HEK293 (cell line): ENCODE measurements at regions of chr17 and their contacts with region 1.

Region 1: DNA sequence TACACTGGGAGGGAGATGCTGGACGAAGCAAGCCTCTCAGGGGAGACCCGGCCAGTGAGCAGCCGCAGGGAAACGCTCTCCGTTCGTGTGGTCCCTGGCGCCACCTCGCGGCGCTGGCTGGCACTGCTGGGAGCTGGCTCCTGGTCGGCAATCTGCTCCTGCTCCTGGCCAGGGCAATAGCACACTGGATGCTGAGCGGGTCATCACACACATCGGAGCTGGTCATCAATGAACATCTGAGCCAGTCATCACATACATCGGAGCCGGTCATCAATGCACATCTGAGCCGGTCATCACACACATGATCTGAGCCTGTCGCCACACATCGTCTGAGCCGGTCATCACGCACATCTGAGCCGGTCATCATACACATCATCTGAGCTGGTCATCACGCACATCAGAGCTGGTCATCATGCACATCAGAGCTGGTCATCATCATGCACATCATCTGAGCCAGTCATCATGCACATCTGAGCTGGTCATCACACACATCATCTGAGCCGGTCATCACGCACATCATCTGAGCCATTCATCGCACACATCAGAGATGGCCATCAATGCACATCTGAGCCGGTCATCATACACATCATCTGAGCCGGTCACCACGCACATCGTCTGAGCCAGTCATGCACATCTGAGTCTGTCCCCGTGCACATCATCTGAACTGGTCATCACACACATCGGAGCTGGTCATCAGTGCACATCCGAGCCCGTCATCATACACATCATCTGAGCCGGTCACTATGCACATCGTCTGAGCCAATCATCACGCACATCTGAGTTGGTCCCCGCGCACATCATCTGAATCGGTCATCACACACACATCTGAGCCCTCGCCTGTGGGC is 217.3 kb downstream of the RBFOX3 start:
- H3K4me3 ChIP-seq: no peak overlapping the region
- H3K27ac ChIP-seq: no peak overlapping the region
- H3K4me1 ChIP-seq: no peaks in the 10 kb centered on the region
- CTCF ChIP-seq: peak; percentile 87

Region 2: GRCh38 chr17:78840725-78841611 is 552.6 kb before region 1 on chr17 and contains the start of gene USP36:
- CTCF ChIA-PET with region 1: no interaction called
- POLR2A ChIA-PET with region 1: no interaction called
- H3K4me3 ChIP-seq: peak within 1 kb of the TSS; percentile 87
- H3K27ac ChIP-seq: peak within 1 kb of the TSS; percentile 87
- H3K4me1 ChIP-seq: peaks cover 8% of the 10 kb centered on the region; the same call in 1 of the 2 replicates
- CTCF ChIP-seq: peak; percentile 86; the same call in 1 of the 2 replicates

Region 3: GRCh38 chr17:79019632-79020584 is 373.7 kb before region 1 on chr17:
- CTCF ChIA-PET with region 1: interaction called, 18 read pairs
- POLR2A ChIA-PET with region 1: no interaction called
- H3K4me3 ChIP-seq: no peak overlapping the region
- H3K27ac ChIP-seq: peak overlapping the region; percentile 14; the same call in 1 of the 2 replicates
- H3K4me1 ChIP-seq: peaks cover 21% of the 10 kb centered on the region
- CTCF ChIP-seq: no peak

Region 4: DNA sequence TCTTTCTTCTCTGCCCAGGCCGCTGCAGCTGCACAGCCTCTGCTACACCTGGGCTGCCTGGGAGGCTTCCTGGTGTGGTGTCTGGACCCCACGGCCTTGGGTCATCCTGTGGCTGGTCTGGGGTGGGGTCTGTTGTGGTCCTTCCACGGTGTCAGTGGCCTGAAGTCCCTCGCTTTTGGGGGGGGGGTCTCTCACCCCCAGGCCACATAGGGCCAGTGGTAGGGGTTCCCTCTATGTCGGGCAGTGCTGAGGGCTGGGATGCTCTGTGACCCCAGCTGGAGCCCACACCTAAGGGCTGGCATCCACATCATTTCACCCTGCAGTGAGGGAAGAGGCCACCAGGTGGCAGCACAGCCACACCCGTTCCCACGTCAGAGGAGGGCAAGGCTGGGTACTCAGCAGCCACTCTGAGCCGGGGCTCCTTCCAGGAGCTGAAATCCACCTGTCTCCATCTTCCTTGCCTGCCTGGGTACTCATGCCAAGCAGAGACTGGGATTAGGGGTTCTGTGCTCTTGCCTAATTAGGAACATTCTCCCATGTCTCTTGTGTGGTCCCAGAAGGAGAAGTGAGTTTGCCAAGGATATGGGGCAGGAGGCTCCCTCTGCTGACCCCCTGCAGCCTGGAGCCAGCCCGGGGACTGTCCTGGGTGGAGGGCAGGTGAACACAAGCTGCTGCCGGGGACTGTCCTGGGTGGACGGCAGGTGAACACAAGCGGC is 306.0 kb before region 1 on chr17:
- CTCF ChIA-PET with region 1: interaction called, 346 read pairs
- POLR2A ChIA-PET with region 1: interaction called, 3 read pairs
- H3K4me3 ChIP-seq: no peak overlapping the region
- H3K27ac ChIP-seq: no peak overlapping the region
- H3K4me1 ChIP-seq: no peaks in the 10 kb centered on the region
- CTCF ChIP-seq: peak; percentile 91

Region 5: GRCh38 chr17:79179334-79179733 is 214.2 kb before region 1 on chr17:
- CTCF ChIA-PET with region 1: interaction called, 15 read pairs
- POLR2A ChIA-PET with region 1: interaction called, 3 read pairs
- H3K4me3 ChIP-seq: no peak overlapping the region
- H3K27ac ChIP-seq: no peak overlapping the region
- H3K4me1 ChIP-seq: no peaks in the 10 kb centered on the region
- CTCF ChIP-seq: no peak

Region 6: GRCh38 chr17:79406316-79406715 is 12.7 kb after region 1 on chr17:
- CTCF ChIA-PET with region 1: interaction called, 106 read pairs
- POLR2A ChIA-PET with region 1: no interaction called
- H3K4me3 ChIP-seq: no peak overlapping the region
- H3K27ac ChIP-seq: no peak overlapping the region
- H3K4me1 ChIP-seq: no peaks in the 10 kb centered on the region
- CTCF ChIP-seq: no peak

Region 7: GRCh38 chr17:79437856-79438457 is 44.4 kb after region 1 on chr17:
- CTCF ChIA-PET with region 1: no interaction called
- POLR2A ChIA-PET with region 1: no interaction called
- H3K4me3 ChIP-seq: no peak overlapping the region
- H3K27ac ChIP-seq: no peak overlapping the region
- H3K4me1 ChIP-seq: no peaks in the 10 kb centered on the region
- CTCF ChIP-seq: no peak

Region 8: GRCh38 chr17:79707931-79708891 is 314.6 kb after region 1 on chr17:
- CTCF ChIA-PET with region 1: interaction called, 13 read pairs
- POLR2A ChIA-PET with region 1: no interaction called
- H3K4me3 ChIP-seq: no peak overlapping the region
- H3K27ac ChIP-seq: no peak overlapping the region
- H3K4me1 ChIP-seq: no peaks in the 10 kb centered on the region
- CTCF ChIP-seq: peak; percentile 67